Ovary (tissue), 10 donors: ENCODE measurements at regions of chr20 and their contacts with region 1.

Region 1: GRCh38 chr20:37345339-37346230 is at the start of gene SRC:
- DNase-seq: peak; percentile 82 to 86 (median 85)
- H3K4me3 ChIP-seq: peak within 1 kb of the TSS; percentile 81
- H3K27ac ChIP-seq: peak within 1 kb of the TSS; percentile 89 to 95
- H3K4me1 ChIP-seq: peaks cover 5% of the 10 kb centered on the region
- H3K27me3 ChIP-seq: no peaks in the 10 kb centered on the region
- CTCF ChIP-seq: no peak
- EP300 ChIP-seq: no peak
- POLR2A ChIP-seq: peak; percentile 32
- total RNA-seq, gene SRC: 23.1 to 72.7 (median 45.5) TPM

Region 2: DNA sequence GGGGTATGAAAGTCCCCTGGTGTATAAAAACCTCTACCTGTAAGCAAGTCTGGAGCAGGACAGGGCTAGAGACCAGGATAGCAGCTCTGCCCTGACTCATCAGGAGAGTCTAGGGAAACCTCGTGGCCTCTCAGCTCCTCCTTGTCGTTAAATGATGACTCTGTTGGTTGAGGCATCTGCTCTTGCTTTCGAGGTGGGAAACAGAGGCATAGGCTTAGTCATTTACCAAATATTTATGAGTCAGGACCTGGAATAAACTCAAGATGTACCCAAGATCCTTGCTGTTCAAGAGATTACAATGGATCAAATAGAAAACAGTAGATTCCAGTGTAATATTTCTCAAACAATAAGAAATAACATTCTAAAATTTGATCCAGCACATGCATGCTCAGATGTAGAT is 50.6 kb before region 1 on chr20:
- intact Hi-C with region 1: loop called in 1 of 4 experiments (anchors 10 kb)
- DNase-seq: no peak
- H3K4me3 ChIP-seq: no peak overlapping the region
- H3K27ac ChIP-seq: no peak overlapping the region
- H3K4me1 ChIP-seq: peaks cover 10% of the 10 kb centered on the region
- H3K27me3 ChIP-seq: no peaks in the 10 kb centered on the region
- CTCF ChIP-seq: no peak
- EP300 ChIP-seq: no peak
- POLR2A ChIP-seq: no peak

Region 3: GRCh38 chr20:37543828-37544227 is 198.2 kb after region 1 on chr20:
- intact Hi-C with region 1: no loop called
- DNase-seq: no peak
- H3K4me3 ChIP-seq: no peak overlapping the region
- H3K27ac ChIP-seq: no peak overlapping the region
- H3K4me1 ChIP-seq: no peaks in the 10 kb centered on the region
- H3K27me3 ChIP-seq: no peaks in the 10 kb centered on the region
- CTCF ChIP-seq: no peak
- EP300 ChIP-seq: no peak
- POLR2A ChIP-seq: no peak